Cardiac septum (tissue), 1 donor: ENCODE measurements at regions of chr1 and their contacts with region 1.

Region 1: DNA sequence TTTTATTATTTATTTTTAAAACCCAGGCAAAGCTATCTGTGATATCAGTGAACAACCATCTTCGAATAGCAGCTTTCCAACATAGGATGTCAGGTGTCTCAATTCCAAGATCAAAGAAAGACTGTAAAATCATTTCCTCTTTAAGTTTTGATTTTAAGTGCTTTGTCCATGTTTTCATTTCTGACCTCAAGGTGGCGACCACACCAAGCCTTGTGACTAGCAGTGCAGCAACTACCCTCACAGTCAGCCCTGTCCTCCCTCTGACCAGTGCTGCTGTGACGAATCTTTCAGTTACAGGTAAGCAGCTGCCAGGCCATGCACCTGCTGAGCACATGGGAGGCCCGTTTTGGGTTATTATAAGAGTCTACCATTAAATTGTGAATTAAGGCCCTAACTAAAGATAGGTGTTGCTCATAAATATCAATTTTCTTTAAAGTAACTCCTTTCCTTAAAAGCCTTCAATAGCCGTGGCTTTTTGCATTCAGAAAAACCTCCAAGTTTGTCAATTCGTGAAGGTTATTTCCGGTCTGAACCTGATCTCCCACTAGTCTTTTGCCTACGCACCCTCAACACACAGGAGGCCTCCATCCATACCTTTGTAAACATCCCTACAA is 117.0 kb downstream of the CD247 start:
- DNase-seq: no peak

Region 2: DNA sequence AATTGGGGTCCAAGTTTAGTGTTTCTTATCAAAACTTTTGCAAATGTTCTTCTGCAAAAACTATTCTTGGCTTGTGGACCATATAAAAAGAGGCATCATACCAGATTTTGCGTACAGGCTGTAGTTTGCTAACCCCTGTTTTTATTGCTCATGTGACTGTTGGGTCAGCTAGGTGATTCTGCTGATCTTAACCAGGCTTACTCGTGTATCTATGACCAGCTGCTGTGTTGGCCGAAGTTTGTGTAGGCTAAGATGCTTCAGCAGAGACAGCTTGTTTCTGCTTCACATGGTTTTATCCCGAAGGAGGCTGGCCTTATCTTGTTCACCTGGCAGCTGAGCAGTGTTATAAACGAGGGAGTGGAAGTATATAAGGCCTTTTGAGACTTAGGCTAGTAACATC is 142.5 kb before region 1 on chr1:
- intact Hi-C with region 1: no loop called
- DNase-seq: no peak

Region 3: GRCh38 chr1:167533851-167534300 is 132.5 kb after region 1 on chr1:
- intact Hi-C with region 1: loop called (anchors 5 kb)
- DNase-seq: peak; percentile 83

Region 4: DNA sequence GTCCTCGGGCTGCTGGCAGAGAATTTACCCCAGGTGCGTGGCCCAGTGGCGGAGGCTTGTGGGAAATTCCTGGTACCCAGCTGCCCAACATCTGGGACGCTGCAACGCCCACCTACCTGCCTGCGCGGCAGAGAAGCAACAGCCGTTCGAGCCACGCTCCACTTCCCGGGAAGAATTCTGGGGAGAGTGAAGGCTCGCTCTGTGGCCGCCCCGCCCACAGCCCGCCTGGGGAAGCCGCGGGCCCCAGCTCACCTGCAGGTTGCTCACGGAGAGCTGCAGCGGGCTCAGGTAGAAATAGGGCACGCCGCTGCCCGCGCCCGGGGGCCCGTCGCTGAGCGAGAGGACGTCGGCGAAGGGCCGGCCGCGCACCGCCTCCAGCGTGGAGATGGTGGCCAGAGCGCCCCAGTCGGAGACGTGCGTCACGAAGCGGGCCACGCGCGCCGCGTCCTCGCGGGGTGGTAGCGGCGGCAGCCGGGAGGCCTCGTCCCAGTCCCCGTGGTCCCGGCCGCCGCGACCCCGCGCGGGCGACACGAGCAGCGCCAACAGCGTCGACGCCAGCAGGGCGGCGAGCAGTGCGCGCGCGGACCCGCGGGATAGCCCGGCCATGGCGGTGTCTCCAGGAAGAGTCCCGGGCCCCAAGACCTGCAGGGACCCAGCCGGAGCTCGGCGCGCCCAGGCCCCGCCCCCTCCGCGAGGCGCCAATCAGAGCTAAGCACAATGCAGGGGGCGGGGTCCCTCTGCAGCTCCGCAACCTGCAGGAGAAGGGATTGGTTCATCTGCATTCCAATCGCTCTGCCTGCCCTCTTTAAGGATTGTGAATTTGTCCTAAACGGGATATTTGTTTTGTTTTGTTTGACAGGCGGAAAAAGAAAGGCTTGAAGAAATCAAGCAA is 152.0 kb after region 1 on chr1 and contains the start of gene CREG1:
- intact Hi-C with region 1: no loop called
- DNase-seq: peak; percentile 97
- total RNA-seq, gene CREG1: 60.1 TPM